Activated CD8-positive, alpha-beta memory T cell treated with anti-CD3 and anti-CD28 coated beads, Interleukin-2, amount 10 ng/mL, durations not matched to agents 7 days and 5 days (primary cell): ENCODE measurements at regions of chr5 and their contacts with region 1.

Region 1: DNA sequence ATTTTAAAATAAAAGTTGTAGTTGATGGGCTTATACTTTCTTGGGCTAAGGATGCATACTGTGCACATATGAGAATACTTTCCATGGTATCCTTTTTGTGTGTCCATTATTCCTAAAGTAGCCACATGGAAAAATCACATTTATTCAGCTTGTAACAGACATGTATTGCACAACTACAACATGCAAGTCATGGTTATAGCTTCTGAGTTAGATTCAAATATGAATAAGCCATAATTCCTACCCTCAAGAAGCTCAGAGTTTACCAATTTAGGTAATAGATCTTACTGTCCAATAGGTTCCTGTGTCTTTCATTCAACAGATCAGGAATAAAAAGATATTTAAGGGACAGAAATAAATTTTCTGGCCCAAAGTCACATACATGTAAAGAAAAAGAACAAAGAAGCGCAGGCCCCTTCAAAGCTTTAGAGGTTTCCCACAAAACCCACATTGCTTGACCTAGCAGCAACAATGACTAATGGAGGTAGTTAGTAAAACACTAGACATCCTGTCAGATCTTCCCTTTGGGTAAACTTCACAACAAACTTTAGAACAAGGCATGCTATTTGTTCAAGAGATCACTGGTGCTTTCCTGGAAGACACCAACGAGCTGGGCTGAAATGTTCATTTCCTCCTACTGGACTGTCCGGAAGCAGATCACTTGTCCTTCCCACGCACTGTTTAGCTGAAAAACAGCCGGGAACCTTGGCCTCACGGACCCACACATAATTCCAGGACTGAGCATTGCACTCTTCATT is 78.4 kb upstream of the ITGA1 start:
- DNase-seq: peak; percentile 82
- ATAC-seq: peak; percentile 88
- H3K4me3 Mint-ChIP-seq: peak overlapping the region; percentile 56
- H3K27ac Mint-ChIP-seq: peak overlapping the region; percentile 85
- H3K4me1 Mint-ChIP-seq: peaks cover 77% of the 10 kb centered on the region
- H3K27me3 Mint-ChIP-seq: no peaks in the 10 kb centered on the region

Region 2: DNA sequence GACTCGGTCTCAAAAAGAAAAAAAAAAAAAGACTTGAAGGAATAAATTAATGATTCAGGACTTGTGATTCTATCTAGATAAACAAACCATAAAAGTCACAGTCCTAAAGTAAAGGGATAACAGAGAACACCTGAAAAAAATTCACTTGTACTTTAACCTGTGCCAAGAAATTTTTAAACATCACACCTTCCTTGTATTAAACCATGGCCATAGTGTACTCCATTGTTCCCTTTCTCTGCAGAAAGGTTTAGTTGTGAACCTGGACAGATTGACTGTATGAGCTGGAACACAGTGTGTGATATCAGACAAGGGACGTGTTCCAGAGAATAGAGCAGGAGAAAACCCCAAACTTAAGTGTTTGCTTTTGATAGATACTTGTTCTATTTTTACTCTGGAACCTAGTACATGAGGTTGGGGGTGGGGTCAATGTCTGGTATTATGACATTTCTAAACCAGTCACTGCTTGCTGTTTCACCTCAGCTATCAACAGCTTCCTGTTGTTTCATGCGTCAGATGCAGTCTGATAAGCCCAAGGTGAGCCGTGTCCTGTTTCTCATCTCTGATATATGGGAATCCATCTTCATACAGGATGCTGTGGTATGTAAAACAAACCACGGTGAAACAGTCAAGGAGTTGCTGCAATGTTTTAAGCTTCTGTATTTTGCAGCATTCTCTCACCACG is 15.9 kb after region 1 on chr5:
- CTCF ChIA-PET with region 1: interaction called, 11 read pairs
- DNase-seq: peak; percentile 89
- ATAC-seq: peak; percentile 96
- H3K4me3 Mint-ChIP-seq: peak overlapping the region; percentile 25
- H3K27ac Mint-ChIP-seq: peak overlapping the region; percentile 96
- H3K4me1 Mint-ChIP-seq: peaks cover 60% of the 10 kb centered on the region
- H3K27me3 Mint-ChIP-seq: no peaks in the 10 kb centered on the region